ENCODE measurements at regions of chr18 and their contacts with region 1.

Region 1: GRCh38 chr18:31555971-31556747 is 35.5 kb upstream of the TTR start:
- DNase-seq: peak in 1 of 2 experiments; percentile 48
- H3K4me3 ChIP-seq: no peak overlapping the region
- H3K4me3 Mint-ChIP-seq: peak overlapping the region; percentile 54
- H3K27ac Mint-ChIP-seq: no peak overlapping the region
- H3K4me1 ChIP-seq: peaks cover 9% of the 10 kb centered on the region; the same call in 1 of the 2 replicates
- H3K4me1 Mint-ChIP-seq: peaks cover 12% of the 10 kb centered on the region
- H3K27me3 ChIP-seq: no peaks in the 10 kb centered on the region
- H3K27me3 Mint-ChIP-seq: no peaks in the 10 kb centered on the region
- CTCF ChIP-seq: peak; percentile 34 to 60

Region 2: DNA sequence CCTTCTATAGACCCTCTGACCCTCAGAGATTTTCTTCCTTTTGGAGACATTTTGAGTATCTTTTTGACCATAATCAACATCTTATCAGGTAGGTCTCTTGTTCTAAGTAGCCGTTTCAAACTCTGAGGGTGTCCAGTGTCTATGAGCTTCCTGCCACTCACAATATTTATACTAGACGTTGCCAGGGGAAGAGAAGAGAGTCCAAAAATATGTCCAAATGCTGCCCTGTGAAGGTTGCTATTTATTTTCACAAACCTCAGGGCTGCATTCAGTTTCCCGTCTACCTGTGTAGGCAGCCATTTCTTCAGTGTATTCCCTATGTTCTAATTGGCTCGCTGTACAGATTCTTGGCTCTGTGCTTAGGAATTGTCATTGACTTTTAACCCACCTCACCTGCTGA is 239.2 kb before region 1 on chr18:
- CTCF ChIA-PET with region 1: no interaction called
- POLR2A ChIA-PET with region 1: no interaction called
- intact Hi-C with region 1: no loop called
- DNase-seq: no peak
- H3K4me3 ChIP-seq: no peak overlapping the region
- H3K4me3 Mint-ChIP-seq: no peak overlapping the region
- H3K27ac Mint-ChIP-seq: no peak overlapping the region
- H3K4me1 ChIP-seq: no peaks in the 10 kb centered on the region
- H3K4me1 Mint-ChIP-seq: no peaks in the 10 kb centered on the region
- H3K27me3 ChIP-seq: no peaks in the 10 kb centered on the region
- H3K27me3 Mint-ChIP-seq: no peaks in the 10 kb centered on the region
- CTCF ChIP-seq: no peak

Region 3: GRCh38 chr18:31587529-31587928 is 31.4 kb after region 1 on chr18:
- CTCF ChIA-PET with region 1: interaction called, 3 read pairs
- POLR2A ChIA-PET with region 1: no interaction called
- intact Hi-C with region 1: loop called (anchors 1 kb)
- DNase-seq: peak; percentile 66 to 73
- H3K4me3 ChIP-seq: no peak overlapping the region
- H3K4me3 Mint-ChIP-seq: peak overlapping the region; percentile 49
- H3K27ac Mint-ChIP-seq: peak overlapping the region; percentile 79
- H3K4me1 ChIP-seq: peaks cover 51% of the 10 kb centered on the region
- H3K4me1 Mint-ChIP-seq: peaks cover 27% of the 10 kb centered on the region
- H3K27me3 ChIP-seq: no peaks in the 10 kb centered on the region
- H3K27me3 Mint-ChIP-seq: no peaks in the 10 kb centered on the region
- CTCF ChIP-seq: no peak

Region 4: DNA sequence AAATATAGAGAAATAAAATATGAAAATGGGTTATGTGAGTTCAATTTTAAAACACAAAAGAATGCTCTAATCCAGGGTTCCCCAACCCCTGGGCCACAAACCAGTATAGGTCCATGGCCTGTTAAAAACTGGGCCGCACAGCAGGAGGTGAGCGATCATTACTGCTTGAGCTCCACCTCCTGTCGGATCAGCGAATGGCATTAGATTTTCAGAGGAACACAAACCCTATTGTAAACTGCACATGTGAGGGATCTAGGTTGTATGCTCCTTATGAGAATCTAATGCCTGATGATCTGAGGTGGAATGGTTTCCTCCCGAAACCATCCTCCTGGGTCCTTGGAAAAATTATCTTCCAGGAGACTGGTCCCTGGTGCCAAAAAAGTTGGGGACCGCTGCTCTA is 70.2 kb after region 1 on chr18:
- CTCF ChIA-PET with region 1: no interaction called
- POLR2A ChIA-PET with region 1: no interaction called
- intact Hi-C with region 1: loop called (anchors 5 kb)
- DNase-seq: no peak
- H3K4me3 ChIP-seq: no peak overlapping the region
- H3K4me3 Mint-ChIP-seq: no peak overlapping the region
- H3K27ac Mint-ChIP-seq: no peak overlapping the region
- H3K4me1 ChIP-seq: no peaks in the 10 kb centered on the region
- H3K4me1 Mint-ChIP-seq: no peaks in the 10 kb centered on the region
- H3K27me3 ChIP-seq: no peaks in the 10 kb centered on the region
- H3K27me3 Mint-ChIP-seq: no peaks in the 10 kb centered on the region
- CTCF ChIP-seq: no peak

Region 5: GRCh38 chr18:31685097-31686082 is 129.2 kb after region 1 on chr18:
- CTCF ChIA-PET with region 1: no interaction called
- POLR2A ChIA-PET with region 1: no interaction called
- intact Hi-C with region 1: loop called (anchors 1 kb)
- DNase-seq: peak; percentile 79 to 83
- H3K4me3 ChIP-seq: peak overlapping the region; percentile 67
- H3K4me3 Mint-ChIP-seq: peak overlapping the region; percentile 94
- H3K27ac Mint-ChIP-seq: peak overlapping the region; percentile 45
- H3K4me1 ChIP-seq: peaks cover 25% of the 10 kb centered on the region
- H3K4me1 Mint-ChIP-seq: peaks cover 13% of the 10 kb centered on the region
- H3K27me3 ChIP-seq: no peaks in the 10 kb centered on the region
- H3K27me3 Mint-ChIP-seq: no peaks in the 10 kb centered on the region
- CTCF ChIP-seq: peak in 1 of 2 experiments; percentile 32

Region 6: GRCh38 chr18:31741097-31741735 is 185.1 kb after region 1 on chr18:
- CTCF ChIA-PET with region 1: no interaction called
- POLR2A ChIA-PET with region 1: no interaction called
- intact Hi-C with region 1: loop called (anchors 5 kb)
- DNase-seq: peak in 1 of 2 experiments; percentile 17
- H3K4me3 ChIP-seq: no peak overlapping the region
- H3K4me3 Mint-ChIP-seq: no peak overlapping the region
- H3K27ac Mint-ChIP-seq: no peak overlapping the region
- H3K4me1 ChIP-seq: no peaks in the 10 kb centered on the region
- H3K4me1 Mint-ChIP-seq: no peaks in the 10 kb centered on the region
- H3K27me3 ChIP-seq: no peaks in the 10 kb centered on the region
- H3K27me3 Mint-ChIP-seq: no peaks in the 10 kb centered on the region
- CTCF ChIP-seq: peak; percentile 47 to 60

Region 7: DNA sequence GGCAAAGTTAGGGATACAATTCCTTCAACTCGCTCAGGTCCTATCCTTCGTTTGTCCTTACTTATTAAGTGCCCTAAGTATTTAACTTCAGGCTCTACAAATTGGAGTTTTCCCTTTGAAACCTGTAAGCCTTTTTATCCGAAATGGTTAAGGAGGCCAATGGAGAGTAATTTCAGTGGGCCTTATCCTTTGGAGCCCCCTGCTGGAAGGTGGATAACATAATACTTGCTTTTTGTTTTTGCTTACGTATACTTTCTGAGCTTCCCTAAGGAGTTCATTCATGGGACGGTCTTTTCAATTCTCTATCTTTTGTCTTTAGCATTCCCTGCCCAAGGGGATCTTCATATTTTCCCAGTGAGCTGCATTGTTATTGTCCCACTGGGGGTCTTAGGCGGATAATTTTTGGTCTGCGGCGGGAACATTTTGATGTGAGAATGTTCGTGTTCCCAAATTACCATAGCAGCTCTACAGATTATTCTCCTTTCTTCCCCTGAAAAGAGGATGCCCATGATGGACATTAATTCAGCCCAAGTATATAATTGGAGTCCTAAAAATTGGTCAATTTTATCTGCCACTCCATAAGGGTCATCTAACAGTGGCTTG is 421.2 kb after region 1 on chr18:
- CTCF ChIA-PET with region 1: no interaction called
- POLR2A ChIA-PET with region 1: no interaction called
- intact Hi-C with region 1: loop called (anchors 10 kb)
- DNase-seq: peak; percentile 30 to 47
- H3K4me3 ChIP-seq: no peak overlapping the region
- H3K4me3 Mint-ChIP-seq: no peak overlapping the region
- H3K27ac Mint-ChIP-seq: no peak overlapping the region
- H3K4me1 ChIP-seq: no peaks in the 10 kb centered on the region
- H3K4me1 Mint-ChIP-seq: no peaks in the 10 kb centered on the region
- H3K27me3 ChIP-seq: no peaks in the 10 kb centered on the region
- H3K27me3 Mint-ChIP-seq: no peaks in the 10 kb centered on the region
- CTCF ChIP-seq: peak in 1 of 2 experiments; percentile 12